ENCODE measurements at regions of chr7 and their contacts with region 1.

Region 1: GRCh38 chr7:140479062-140479738 is at the start of gene MKRN1:
- DNase-seq: peak; percentile 86 to 96 (median 92)
- ATAC-seq: peak; percentile 86
- H3K4me3 ChIP-seq: peak within 1 kb of the TSS; percentile 91
- H3K4me3 Mint-ChIP-seq: peak within 1 kb of the TSS; percentile 100
- H3K27ac ChIP-seq: peak within 1 kb of the TSS; percentile 73 to 74
- H3K27ac Mint-ChIP-seq: peak within 1 kb of the TSS; percentile 85
- H3K4me1 ChIP-seq: peaks cover 29% of the 10 kb centered on the region
- H3K4me1 Mint-ChIP-seq: peaks cover 29% of the 10 kb centered on the region
- H3K27me3 ChIP-seq: no peaks in the 10 kb centered on the region
- H3K27me3 Mint-ChIP-seq: no peaks in the 10 kb centered on the region
- CTCF ChIP-seq: no peak
- total RNA-seq, gene MKRN1: 115 to 129 TPM

Region 2: GRCh38 chr7:140062528-140063299 is 416.5 kb before region 1 on chr7 and contains the start of gene PARP12:
- CTCF ChIA-PET with region 1: no interaction called
- POLR2A ChIA-PET with region 1: interaction called, 3 read pairs
- intact Hi-C with region 1: loop called in 1 of 2 experiments (anchors 10 kb)
- DNase-seq: peak; percentile 71 to 94 (median 86)
- ATAC-seq: peak; percentile 67
- H3K4me3 ChIP-seq: peak within 1 kb of the TSS; percentile 71
- H3K4me3 Mint-ChIP-seq: peak within 1 kb of the TSS; percentile 85
- H3K27ac ChIP-seq: peak within 1 kb of the TSS; percentile 67 to 82
- H3K27ac Mint-ChIP-seq: peak within 1 kb of the TSS; percentile 83
- H3K4me1 ChIP-seq: peaks cover 49% of the 10 kb centered on the region
- H3K4me1 Mint-ChIP-seq: peaks cover 55% of the 10 kb centered on the region
- H3K27me3 ChIP-seq: no peaks in the 10 kb centered on the region
- H3K27me3 Mint-ChIP-seq: no peaks in the 10 kb centered on the region
- CTCF ChIP-seq: no peak
- total RNA-seq, gene PARP12: 76.7 to 78.5 TPM

Region 3: GRCh38 chr7:140403878-140404564 is 75.2 kb before region 1 on chr7 and contains the start of gene RAB19:
- CTCF ChIA-PET with region 1: no interaction called
- POLR2A ChIA-PET with region 1: interaction called, 5 read pairs
- intact Hi-C with region 1: loop called in 1 of 2 experiments (anchors 5 kb)
- DNase-seq: peak; percentile 20 to 77 (median 45)
- ATAC-seq: peak; percentile 86
- H3K4me3 ChIP-seq: peak within 1 kb of the TSS; percentile 86
- H3K4me3 Mint-ChIP-seq: peak within 1 kb of the TSS; percentile 96
- H3K27ac ChIP-seq: peak within 1 kb of the TSS; percentile 79 to 80
- H3K27ac Mint-ChIP-seq: peak within 1 kb of the TSS; percentile 97
- H3K4me1 ChIP-seq: peaks cover 20% of the 10 kb centered on the region
- H3K4me1 Mint-ChIP-seq: peaks cover 25% of the 10 kb centered on the region
- H3K27me3 ChIP-seq: no peaks in the 10 kb centered on the region
- H3K27me3 Mint-ChIP-seq: no peaks in the 10 kb centered on the region
- CTCF ChIP-seq: no peak
- total RNA-seq, gene RAB19: 1.6 to 2.8 TPM

Region 4: DNA sequence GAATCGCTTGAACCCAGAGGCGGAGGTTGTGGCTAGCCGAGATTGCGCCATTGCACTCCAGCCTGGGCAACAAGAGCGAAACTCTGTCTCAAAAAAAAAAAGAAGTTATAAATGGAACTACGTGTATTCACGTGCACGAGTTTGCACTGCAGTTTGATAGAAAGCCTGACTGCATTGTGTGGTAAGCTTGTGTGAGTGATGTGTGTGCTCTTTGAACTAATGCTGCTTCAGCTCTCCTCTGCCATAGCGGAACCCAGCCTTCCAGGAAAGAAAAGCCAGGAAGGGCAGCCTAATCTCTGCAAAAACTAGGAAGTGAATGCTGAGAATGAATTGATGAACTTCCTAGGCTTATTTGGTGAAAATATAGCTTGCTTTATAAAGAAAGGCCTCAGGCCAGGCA is 15.7 kb after region 1 on chr7:
- CTCF ChIA-PET with region 1: interaction called, 34 read pairs
- POLR2A ChIA-PET with region 1: interaction called, 43 read pairs
- intact Hi-C with region 1: loop called (anchors 1 kb)
- DNase-seq: no peak
- ATAC-seq: no peak
- H3K4me3 ChIP-seq: no peak overlapping the region
- H3K4me3 Mint-ChIP-seq: no peak overlapping the region
- H3K27ac ChIP-seq: no peak overlapping the region
- H3K27ac Mint-ChIP-seq: no peak overlapping the region
- H3K4me1 ChIP-seq: peaks cover 3% of the 10 kb centered on the region
- H3K4me1 Mint-ChIP-seq: no peaks in the 10 kb centered on the region
- H3K27me3 ChIP-seq: no peaks in the 10 kb centered on the region
- H3K27me3 Mint-ChIP-seq: no peaks in the 10 kb centered on the region
- CTCF ChIP-seq: no peak

Region 5: DNA sequence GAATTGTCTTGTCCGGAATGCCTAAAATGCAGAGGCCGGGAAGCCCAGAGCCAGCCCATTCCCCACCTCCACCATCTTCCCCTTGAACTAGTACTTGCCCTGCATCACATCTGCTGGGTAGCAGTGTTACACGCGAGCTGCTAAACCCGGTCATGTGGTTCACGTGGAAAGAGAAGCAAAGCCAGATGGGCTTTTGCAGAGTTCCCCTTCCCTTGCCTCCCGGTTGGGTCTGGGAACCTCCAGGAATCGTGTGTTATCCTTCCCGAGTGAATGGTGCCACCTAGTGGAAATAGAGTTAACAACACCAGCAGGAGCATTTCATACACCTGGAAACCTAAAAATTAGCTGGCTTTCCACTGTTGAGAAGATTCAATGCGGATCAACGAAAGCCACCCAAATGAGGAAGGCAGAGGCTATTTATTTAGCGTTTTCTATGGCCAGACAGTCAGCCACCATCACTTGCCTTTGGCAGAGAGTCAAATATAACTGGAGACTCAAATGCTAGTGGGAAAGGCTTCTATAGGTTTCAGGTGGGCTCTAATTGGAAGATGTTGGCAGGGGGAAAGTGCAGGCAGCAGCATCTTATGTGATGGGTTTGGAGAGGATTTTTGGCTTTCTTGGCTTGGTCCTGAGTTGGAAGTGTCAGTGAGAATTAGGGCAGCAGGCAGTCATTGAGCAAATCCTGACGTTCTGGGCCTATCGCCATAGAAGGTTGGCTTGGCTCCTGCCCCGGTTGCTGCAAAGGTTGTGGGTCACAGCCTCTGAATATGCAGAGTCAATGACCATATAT is 174.3 kb after region 1 on chr7:
- CTCF ChIA-PET with region 1: interaction called, 4 read pairs
- POLR2A ChIA-PET with region 1: interaction called, 3 read pairs
- intact Hi-C with region 1: loop called (anchors 1 kb)
- DNase-seq: peak in 6 of 14 experiments; percentile 15 to 69 (median 47)
- ATAC-seq: no peak
- H3K4me3 ChIP-seq: no peak overlapping the region
- H3K4me3 Mint-ChIP-seq: no peak overlapping the region
- H3K27ac ChIP-seq: no peak overlapping the region
- H3K27ac Mint-ChIP-seq: no peak overlapping the region
- H3K4me1 ChIP-seq: peaks cover 20% of the 10 kb centered on the region
- H3K4me1 Mint-ChIP-seq: peaks cover 18% of the 10 kb centered on the region
- H3K27me3 ChIP-seq: no peaks in the 10 kb centered on the region
- H3K27me3 Mint-ChIP-seq: peaks cover 42% of the 10 kb centered on the region
- CTCF ChIP-seq: peak; percentile 95

Region 6: GRCh38 chr7:140673063-140673773 is 194.0 kb after region 1 on chr7:
- CTCF ChIA-PET with region 1: no interaction called
- POLR2A ChIA-PET with region 1: interaction called, 10 read pairs
- intact Hi-C with region 1: loop called (anchors 2 to 5 kb)
- DNase-seq: peak; percentile 39 to 82 (median 59)
- ATAC-seq: peak; percentile 74
- H3K4me3 ChIP-seq: peak overlapping the region; percentile 63
- H3K4me3 Mint-ChIP-seq: peak overlapping the region; percentile 88
- H3K27ac ChIP-seq: peak overlapping the region; percentile 71 to 79
- H3K27ac Mint-ChIP-seq: peak overlapping the region; percentile 90
- H3K4me1 ChIP-seq: peaks cover 29% of the 10 kb centered on the region
- H3K4me1 Mint-ChIP-seq: peaks cover 32% of the 10 kb centered on the region
- H3K27me3 ChIP-seq: no peaks in the 10 kb centered on the region
- H3K27me3 Mint-ChIP-seq: no peaks in the 10 kb centered on the region
- CTCF ChIP-seq: no peak

Region 7: DNA sequence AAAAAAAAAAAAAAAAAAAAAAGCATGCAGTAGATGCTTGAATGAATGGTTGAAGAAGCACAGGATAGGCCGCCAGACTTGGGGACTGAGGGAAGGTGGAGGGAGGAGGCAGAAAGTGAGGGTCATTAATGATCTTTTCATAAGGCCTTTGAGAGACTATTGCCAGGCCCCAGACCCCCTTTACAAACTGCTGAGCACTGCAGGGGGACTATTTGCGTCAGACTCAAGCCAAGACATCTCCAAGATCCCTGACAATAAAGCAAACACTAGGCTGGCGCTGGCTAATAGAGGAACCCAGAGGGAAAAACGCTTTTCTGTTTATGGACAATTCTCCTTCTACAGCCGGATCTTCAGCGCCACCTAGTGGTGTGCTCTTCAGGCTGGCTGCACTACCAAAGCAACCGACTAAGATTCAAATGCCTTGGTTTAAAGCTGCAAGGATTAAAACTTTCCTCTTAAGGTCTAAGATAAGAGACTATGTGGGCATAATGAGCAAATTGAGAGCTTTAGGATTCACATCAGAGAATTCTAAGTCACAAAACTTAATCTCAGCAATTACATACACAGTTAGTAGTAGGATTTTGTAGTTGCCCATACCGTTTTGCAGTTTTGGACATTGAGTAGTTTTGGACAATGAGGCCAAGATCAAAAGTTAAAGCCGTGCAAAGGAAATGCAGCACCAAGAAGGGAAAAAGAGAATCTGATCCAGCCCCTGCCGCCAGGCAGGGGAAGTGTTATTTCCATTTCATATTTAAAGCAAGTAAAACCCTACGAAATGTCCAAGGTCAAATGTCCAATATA is 1054.1 kb after region 1 on chr7:
- CTCF ChIA-PET with region 1: no interaction called
- POLR2A ChIA-PET with region 1: no interaction called
- intact Hi-C with region 1: loop called in 1 of 2 experiments (anchors 2 kb)
- DNase-seq: peak; percentile 31 to 83 (median 52)
- ATAC-seq: peak; percentile 48
- H3K4me3 ChIP-seq: no peak overlapping the region
- H3K4me3 Mint-ChIP-seq: no peak overlapping the region
- H3K27ac ChIP-seq: no peak overlapping the region
- H3K27ac Mint-ChIP-seq: no peak overlapping the region
- H3K4me1 ChIP-seq: peaks cover 3% of the 10 kb centered on the region
- H3K4me1 Mint-ChIP-seq: no peaks in the 10 kb centered on the region
- H3K27me3 ChIP-seq: peaks cover 0 to 7% of the 10 kb centered on the region in 2 experiments
- H3K27me3 Mint-ChIP-seq: peaks cover 42% of the 10 kb centered on the region
- CTCF ChIP-seq: peak; percentile 96